Naive thymus-derived CD4-positive, alpha-beta T cell (primary cell): ENCODE measurements at regions of chr14 and their contacts with region 1.

Region 1: DNA sequence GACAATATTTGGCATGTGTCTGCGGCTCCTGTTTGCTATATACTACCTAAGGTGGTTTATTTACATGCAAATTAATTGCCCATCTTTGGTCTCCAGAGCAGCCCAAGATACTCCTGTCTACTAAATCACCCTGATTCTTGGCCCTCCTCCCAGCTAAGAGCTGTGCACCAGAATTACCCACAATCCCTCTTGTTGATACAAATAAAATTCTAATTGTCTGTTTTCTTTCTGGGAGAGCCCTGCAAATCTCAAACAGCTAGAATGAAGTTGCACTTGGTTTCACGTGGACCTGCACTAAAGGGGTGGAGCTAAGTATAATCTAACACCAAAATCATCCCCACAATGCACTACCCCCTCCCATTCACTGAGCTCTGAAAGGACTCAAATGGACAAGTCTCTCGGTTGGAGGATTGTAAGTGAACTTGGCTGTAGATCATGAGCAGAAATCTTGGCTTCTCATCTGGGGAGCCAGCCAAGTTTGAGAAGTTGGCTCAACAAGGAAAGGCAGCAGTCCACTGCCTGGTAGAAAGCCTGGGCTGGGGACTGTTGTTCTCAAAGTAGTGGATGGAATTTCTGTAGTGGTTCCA is 6.6 kb downstream of the MAX start:
- DNase-seq: no peak
- ATAC-seq: no peak
- H3K4me3 ChIP-seq: peak overlapping the region; percentile 1
- H3K4me3 Mint-ChIP-seq: peak overlapping the region; percentile 52 to 91 (median 68)
- H3K27ac ChIP-seq: no peak overlapping the region
- H3K27ac Mint-ChIP-seq: peak overlapping the region; percentile 28 to 99 (median 67)
- H3K4me1 ChIP-seq: peaks cover 34 to 61% of the 10 kb centered on the region in 2 donors
- H3K4me1 Mint-ChIP-seq: peaks cover 56 to 96% (median 90%) of the 10 kb centered on the region in 7 donors
- H3K27me3 ChIP-seq: no peaks in the 10 kb centered on the region
- H3K27me3 Mint-ChIP-seq: no peaks in the 10 kb centered on the region

Region 2: GRCh38 chr14:65054471-65055085 is 41.1 kb before region 1 on chr14:
- CTCF ChIA-PET with region 1: no interaction called
- POLR2A ChIA-PET with region 1: no interaction called
- intact Hi-C with region 1: loop called in 1 of 2 experiments (anchors 5 kb)
- DNase-seq: no peak
- ATAC-seq: peak; percentile 71
- H3K4me3 ChIP-seq: no peak overlapping the region
- H3K4me3 Mint-ChIP-seq: no peak overlapping the region
- H3K27ac ChIP-seq: no peak overlapping the region
- H3K27ac Mint-ChIP-seq: peak overlapping the region in 4 of 9 donors; percentile 4 to 79 (median 70)
- H3K4me1 ChIP-seq: no peaks in the 10 kb centered on the region
- H3K4me1 Mint-ChIP-seq: peaks cover 0 to 19% (median 8%) of the 10 kb centered on the region in 7 donors
- H3K27me3 ChIP-seq: no peaks in the 10 kb centered on the region
- H3K27me3 Mint-ChIP-seq: no peaks in the 10 kb centered on the region

Region 3: DNA sequence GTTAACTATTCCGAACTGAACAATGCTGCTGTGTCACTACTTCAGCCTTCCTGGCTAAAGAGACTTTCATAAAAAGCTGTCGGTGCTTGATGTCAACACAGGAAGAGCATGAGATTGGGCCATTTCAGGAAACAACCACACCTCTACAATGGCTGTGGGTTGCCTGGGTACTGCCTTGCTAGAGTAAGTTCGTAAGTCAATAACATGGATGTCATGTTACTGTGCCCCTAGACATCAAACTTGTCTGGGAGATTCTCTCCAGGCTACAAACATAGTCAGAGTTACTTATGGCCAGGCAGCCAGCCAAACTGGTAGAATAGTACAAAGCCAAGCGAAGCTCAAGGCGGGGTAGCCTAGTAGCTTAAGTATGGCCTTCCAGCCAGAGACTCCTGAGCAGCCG is 16.5 kb before region 1 on chr14:
- CTCF ChIA-PET with region 1: interaction called, 3 read pairs
- POLR2A ChIA-PET with region 1: interaction called, 5 read pairs
- intact Hi-C with region 1: loop called in 1 of 2 experiments (anchors 2 kb)
- DNase-seq: peak in 3 of 9 donors; percentile 16 to 31 (median 23)
- ATAC-seq: peak; percentile 48
- H3K4me3 ChIP-seq: no peak overlapping the region
- H3K4me3 Mint-ChIP-seq: peak overlapping the region in 8 of 10 donors; percentile 20 to 67 (median 54)
- H3K27ac ChIP-seq: no peak overlapping the region
- H3K27ac Mint-ChIP-seq: peak overlapping the region; percentile 67 to 92 (median 86)
- H3K4me1 ChIP-seq: peaks cover 0 to 41% of the 10 kb centered on the region in 2 donors
- H3K4me1 Mint-ChIP-seq: peaks cover 62 to 81% (median 72%) of the 10 kb centered on the region in 7 donors
- H3K27me3 ChIP-seq: no peaks in the 10 kb centered on the region
- H3K27me3 Mint-ChIP-seq: no peaks in the 10 kb centered on the region

Region 4: DNA sequence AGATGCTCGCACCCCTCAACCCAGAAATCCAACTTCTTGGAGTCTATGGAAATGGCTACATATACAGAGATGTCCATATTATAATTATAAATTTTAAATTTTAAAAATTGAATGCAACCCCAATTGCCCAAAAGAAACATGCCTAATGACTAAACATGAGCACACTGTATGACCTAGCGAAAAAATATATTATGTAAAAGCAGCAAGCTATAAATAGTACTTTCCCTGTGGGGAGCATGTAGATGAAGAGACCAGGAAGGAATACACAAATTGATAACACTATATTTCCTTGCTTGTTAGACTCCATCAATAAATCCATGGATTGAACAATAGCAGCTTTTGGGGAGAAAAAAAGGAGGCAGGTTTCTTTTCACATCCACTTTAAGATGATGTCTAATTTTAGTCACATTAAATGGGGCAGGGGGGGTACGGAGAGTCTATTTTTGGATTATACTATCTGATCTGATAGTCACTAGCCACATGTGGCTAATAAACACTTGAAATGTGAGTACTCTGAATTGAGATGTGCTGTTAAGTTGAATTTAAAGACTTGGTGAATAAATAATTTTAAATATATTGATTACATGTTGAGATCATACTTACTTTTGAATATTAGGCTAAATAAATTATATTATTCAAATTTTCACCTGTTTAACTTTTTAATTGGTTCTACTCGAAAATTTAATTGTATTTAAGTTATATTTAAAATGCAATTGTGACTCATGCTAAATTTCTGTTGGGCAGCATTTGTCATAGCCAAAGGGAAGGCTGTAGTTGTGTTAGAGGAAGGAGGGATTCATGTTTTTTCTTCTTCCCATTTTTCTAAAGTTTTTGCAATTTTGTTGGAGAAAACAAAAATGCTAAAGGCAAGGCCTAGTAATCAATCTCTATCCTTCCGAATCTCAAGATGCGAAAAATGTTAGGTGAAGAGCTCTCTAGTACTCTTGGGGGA is 10.9 kb before region 1 on chr14:
- CTCF ChIA-PET with region 1: interaction called, 3 read pairs
- POLR2A ChIA-PET with region 1: interaction called, 9 read pairs
- intact Hi-C with region 1: loop called in 1 of 2 experiments (anchors 2 kb)
- DNase-seq: no peak
- ATAC-seq: no peak
- H3K4me3 ChIP-seq: no peak overlapping the region
- H3K4me3 Mint-ChIP-seq: peak overlapping the region in 3 of 10 donors; percentile 5 to 38 (median 32)
- H3K27ac ChIP-seq: no peak overlapping the region
- H3K27ac Mint-ChIP-seq: peak overlapping the region in 5 of 9 donors; percentile 48 to 84 (median 51)
- H3K4me1 ChIP-seq: peaks cover 0 to 31% of the 10 kb centered on the region in 2 donors
- H3K4me1 Mint-ChIP-seq: peaks cover 46 to 91% (median 83%) of the 10 kb centered on the region in 7 donors
- H3K27me3 ChIP-seq: no peaks in the 10 kb centered on the region
- H3K27me3 Mint-ChIP-seq: no peaks in the 10 kb centered on the region